CD8-positive, alpha-beta T cell (primary cell): ENCODE measurements at regions of chr14 and their contacts with region 1.

Region 1: DNA sequence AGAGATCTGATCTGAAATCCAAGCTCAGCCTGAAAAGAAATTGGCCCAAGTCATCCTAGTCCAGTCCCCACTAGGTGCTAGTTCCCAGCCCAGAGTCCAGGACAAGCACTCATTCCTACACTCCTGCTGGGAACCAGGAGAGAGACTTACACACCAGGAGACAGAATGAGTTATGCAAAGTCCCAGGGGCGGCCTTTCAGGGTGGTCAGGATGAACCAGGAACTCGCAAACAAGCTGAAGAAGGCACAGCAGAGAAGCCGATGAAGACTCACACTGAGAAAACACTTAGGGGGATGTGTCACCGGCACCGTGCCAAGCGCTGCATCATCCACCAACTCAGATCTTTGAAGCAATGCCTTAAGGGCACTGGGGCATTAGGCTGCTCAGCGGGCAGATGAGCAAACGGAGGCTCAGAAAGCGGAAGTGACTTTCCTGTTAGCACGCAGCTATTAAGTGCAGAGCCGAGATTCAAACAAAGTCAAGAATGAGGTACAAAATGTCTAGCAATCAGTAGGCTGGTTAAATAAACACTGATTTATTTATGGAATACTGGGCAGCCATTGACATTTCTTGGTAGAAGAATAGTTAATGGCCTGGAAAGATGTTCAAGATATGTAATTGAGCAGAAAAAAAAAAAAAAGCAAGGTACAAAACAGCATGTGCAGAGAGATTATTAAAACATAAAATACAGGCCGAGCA is 78.7 kb downstream of the LRRC74A start:
- DNase-seq: peak; percentile 38 to 85 (median 77)
- ATAC-seq: peak; percentile 84
- H3K4me3 ChIP-seq: peak overlapping the region in 1 of 2 experiments; percentile 3
- H3K4me3 Mint-ChIP-seq: peak overlapping the region; percentile 61
- H3K27ac ChIP-seq: no peak overlapping the region
- H3K27ac Mint-ChIP-seq: peak overlapping the region; percentile 68
- H3K4me1 ChIP-seq: peaks cover 28% of the 10 kb centered on the region
- H3K4me1 Mint-ChIP-seq: peaks cover 23% of the 10 kb centered on the region
- H3K27me3 ChIP-seq: no peaks in the 10 kb centered on the region
- H3K27me3 Mint-ChIP-seq: no peaks in the 10 kb centered on the region
- CTCF ChIP-seq: no peak

Region 2: GRCh38 chr14:76576047-76576741 is 328.7 kb before region 1 on chr14:
- CTCF ChIA-PET with region 1: no interaction called
- POLR2A ChIA-PET with region 1: no interaction called
- intact Hi-C with region 1: no loop called
- DNase-seq: no peak
- ATAC-seq: no peak
- H3K4me3 ChIP-seq: no peak overlapping the region
- H3K4me3 Mint-ChIP-seq: no peak overlapping the region
- H3K27ac ChIP-seq: no peak overlapping the region
- H3K27ac Mint-ChIP-seq: no peak overlapping the region
- H3K4me1 ChIP-seq: no peaks in the 10 kb centered on the region
- H3K4me1 Mint-ChIP-seq: no peaks in the 10 kb centered on the region
- H3K27me3 ChIP-seq: no peaks in the 10 kb centered on the region
- H3K27me3 Mint-ChIP-seq: peaks cover 17% of the 10 kb centered on the region
- CTCF ChIP-seq: no peak

Region 3: DNA sequence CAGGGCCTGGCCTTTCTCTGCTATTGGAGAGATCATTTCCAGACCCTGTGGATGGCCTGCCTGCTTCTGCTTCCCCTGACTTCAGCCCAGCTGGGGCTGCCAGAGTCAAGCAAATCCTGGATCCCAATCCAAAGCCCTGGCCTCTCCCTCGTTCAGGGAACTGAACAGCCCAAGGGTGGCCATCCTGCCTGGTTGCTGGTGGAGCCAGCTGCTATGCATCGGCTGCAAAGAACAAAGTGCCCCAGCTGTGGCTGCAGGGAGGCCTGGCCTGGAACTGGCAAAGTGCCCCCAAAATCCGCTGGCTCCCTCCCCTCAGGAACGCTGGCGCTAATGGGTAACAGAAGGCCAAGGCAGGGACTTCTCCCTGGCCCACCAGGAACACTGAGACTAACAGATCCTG is 22.2 kb before region 1 on chr14:
- CTCF ChIA-PET with region 1: interaction called, 10 read pairs
- POLR2A ChIA-PET with region 1: no interaction called
- intact Hi-C with region 1: no loop called
- DNase-seq: no peak
- ATAC-seq: no peak
- H3K4me3 ChIP-seq: no peak overlapping the region
- H3K4me3 Mint-ChIP-seq: no peak overlapping the region
- H3K27ac ChIP-seq: no peak overlapping the region
- H3K27ac Mint-ChIP-seq: no peak overlapping the region
- H3K4me1 ChIP-seq: no peaks in the 10 kb centered on the region
- H3K4me1 Mint-ChIP-seq: peaks cover 5% of the 10 kb centered on the region
- H3K27me3 ChIP-seq: no peaks in the 10 kb centered on the region
- H3K27me3 Mint-ChIP-seq: no peaks in the 10 kb centered on the region
- CTCF ChIP-seq: no peak